PC-3 (cell line): ENCODE measurements at regions of chr2 and their contacts with region 1.

Region 1: DNA sequence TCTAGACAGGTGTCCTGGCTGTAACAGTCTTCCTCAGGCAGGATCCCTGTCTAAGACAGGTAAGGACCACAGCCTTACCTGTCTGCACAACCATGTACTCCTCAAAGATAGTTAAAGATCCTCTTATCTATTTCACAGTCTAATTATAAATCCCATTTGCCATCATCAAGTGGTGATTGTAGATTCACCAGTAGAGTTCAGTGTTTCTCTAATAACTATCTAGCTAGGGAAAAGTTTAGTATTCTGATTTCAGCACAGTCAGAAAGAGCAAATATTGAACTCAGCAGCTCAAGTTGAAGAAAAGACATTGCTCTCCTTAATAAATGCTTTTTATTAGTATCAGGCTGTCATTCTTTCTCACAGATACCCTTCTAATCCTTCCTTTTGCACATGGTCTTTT is 1305.5 kb upstream of the NXPH2 start:
- DNase-seq: peak; percentile 40
- ATAC-seq: peak; percentile 73
- H3K4me3 ChIP-seq: no peak overlapping the region
- H3K27ac ChIP-seq: no peak overlapping the region
- H3K4me1 ChIP-seq: no peaks in the 10 kb centered on the region
- H3K27me3 ChIP-seq: no peaks in the 10 kb centered on the region
- CTCF ChIP-seq: peak; percentile 57

Region 2: GRCh38 chr2:139478206-139478914 is 607.3 kb before region 1 on chr2:
- CTCF ChIA-PET with region 1: no interaction called
- POLR2A ChIA-PET with region 1: no interaction called
- intact Hi-C with region 1: loop called (anchors 10 kb)
- DNase-seq: peak; percentile 37
- ATAC-seq: peak; percentile 50
- H3K4me3 ChIP-seq: no peak overlapping the region
- H3K27ac ChIP-seq: no peak overlapping the region
- H3K4me1 ChIP-seq: no peaks in the 10 kb centered on the region
- H3K27me3 ChIP-seq: no peaks in the 10 kb centered on the region
- CTCF ChIP-seq: peak; percentile 58

Region 3: DNA sequence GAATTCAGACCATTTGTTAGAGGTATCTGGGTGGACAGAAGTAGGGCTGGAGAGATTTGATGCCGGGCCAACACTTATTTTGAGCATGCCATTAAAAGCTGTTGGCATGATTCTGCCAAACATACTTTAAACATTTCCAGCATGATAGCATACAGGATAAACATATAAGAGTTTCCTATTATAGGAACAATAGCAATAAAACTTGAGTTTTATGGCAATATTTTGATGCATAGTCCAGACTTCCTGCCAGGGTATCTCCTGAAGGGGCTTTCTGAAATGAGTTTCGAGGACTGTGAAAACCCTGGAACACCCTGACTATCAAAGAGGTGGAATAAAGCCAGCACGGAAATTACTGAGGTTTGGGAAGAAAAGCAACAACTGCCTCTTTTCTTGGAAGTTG is 92.6 kb after region 1 on chr2:
- CTCF ChIA-PET with region 1: no interaction called
- POLR2A ChIA-PET with region 1: no interaction called
- intact Hi-C with region 1: loop called (anchors 5 kb)
- DNase-seq: peak; percentile 88
- ATAC-seq: peak; percentile 87
- H3K4me3 ChIP-seq: peak overlapping the region; percentile 16; the same call in 1 of the 2 replicates
- H3K27ac ChIP-seq: peak overlapping the region; percentile 27; the same call in 1 of the 2 replicates
- H3K4me1 ChIP-seq: peaks cover 17% of the 10 kb centered on the region
- H3K27me3 ChIP-seq: no peaks in the 10 kb centered on the region
- CTCF ChIP-seq: no peak

Region 4: DNA sequence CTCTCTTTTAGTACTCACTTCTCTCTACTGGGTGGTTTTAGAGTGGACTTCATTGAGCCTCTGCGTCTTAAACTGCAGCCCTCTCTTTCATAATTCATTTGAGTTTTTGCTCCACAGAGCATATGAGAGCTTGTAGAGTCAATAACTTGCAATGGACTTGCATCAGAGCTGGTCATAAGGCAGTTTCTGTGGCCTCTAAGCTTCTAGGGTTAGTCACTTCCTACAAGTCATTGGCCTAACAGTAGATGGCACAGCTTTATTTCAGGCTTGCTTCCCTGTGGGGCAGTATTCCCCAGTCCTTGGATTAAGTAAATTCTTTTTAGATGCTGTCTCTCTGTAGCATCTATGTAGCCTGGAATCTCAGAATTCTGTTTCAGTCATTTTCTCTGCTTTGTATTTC is 609.5 kb after region 1 on chr2:
- CTCF ChIA-PET with region 1: interaction called, 12 read pairs
- POLR2A ChIA-PET with region 1: interaction called, 6 read pairs
- intact Hi-C with region 1: loop called (anchors 10 kb)
- DNase-seq: peak; percentile 81
- ATAC-seq: peak; percentile 100
- H3K4me3 ChIP-seq: no peak overlapping the region
- H3K27ac ChIP-seq: peak overlapping the region; percentile 5; the same call in 1 of the 2 replicates
- H3K4me1 ChIP-seq: peaks cover 7% of the 10 kb centered on the region
- H3K27me3 ChIP-seq: no peaks in the 10 kb centered on the region
- CTCF ChIP-seq: peak; percentile 43

Region 5: DNA sequence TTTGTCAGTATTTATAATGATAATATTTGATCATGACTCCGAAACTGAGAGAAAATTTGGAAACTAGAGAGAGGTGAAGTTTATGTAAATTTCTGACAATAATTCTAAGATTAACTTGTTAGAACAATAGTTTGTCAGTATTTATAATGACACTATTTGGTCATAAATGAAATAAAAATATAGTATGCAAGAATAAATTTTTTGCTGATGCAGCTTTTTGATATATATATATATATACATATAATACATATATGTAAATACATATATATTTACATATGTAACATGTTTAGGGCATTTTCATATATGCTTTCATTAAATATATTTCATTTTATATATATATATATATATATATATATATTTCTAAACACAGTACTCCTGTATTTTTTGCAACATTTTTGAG is 887.0 kb after region 1 on chr2:
- CTCF ChIA-PET with region 1: no interaction called
- POLR2A ChIA-PET with region 1: no interaction called
- intact Hi-C with region 1: loop called (anchors 10 kb)
- DNase-seq: no peak
- ATAC-seq: no peak
- H3K4me3 ChIP-seq: no peak overlapping the region
- H3K27ac ChIP-seq: no peak overlapping the region
- H3K4me1 ChIP-seq: no peaks in the 10 kb centered on the region
- H3K27me3 ChIP-seq: no peaks in the 10 kb centered on the region
- CTCF ChIP-seq: no peak